Activated B cell treated with CpG ODN at 0.5 μM for 24 hours (primary cell): ENCODE measurements at regions of chr4 and their contacts with region 1.

Region 1: GRCh38 chr4:78667764-78668163 is 108.4 kb upstream of the BMP2K start:
- DNase-seq: no peak
- ATAC-seq: peak; percentile 79
- H3K4me3 Mint-ChIP-seq: peak overlapping the region; percentile 54
- H3K27ac Mint-ChIP-seq: peak overlapping the region; percentile 83
- H3K4me1 Mint-ChIP-seq: peaks cover 85% of the 10 kb centered on the region
- H3K27me3 Mint-ChIP-seq: no peaks in the 10 kb centered on the region
- CTCF ChIP-seq: no peak

Region 2: GRCh38 chr4:78542373-78542772 is 125.4 kb before region 1 on chr4:
- CTCF ChIA-PET with region 1: no interaction called
- POLR2A ChIA-PET with region 1: no interaction called
- intact Hi-C with region 1: no loop called
- DNase-seq: no peak
- ATAC-seq: no peak
- H3K4me3 Mint-ChIP-seq: no peak overlapping the region
- H3K27ac Mint-ChIP-seq: no peak overlapping the region
- H3K4me1 Mint-ChIP-seq: peaks cover 4% of the 10 kb centered on the region
- H3K27me3 Mint-ChIP-seq: peaks cover 4% of the 10 kb centered on the region
- CTCF ChIP-seq: no peak

Region 3: DNA sequence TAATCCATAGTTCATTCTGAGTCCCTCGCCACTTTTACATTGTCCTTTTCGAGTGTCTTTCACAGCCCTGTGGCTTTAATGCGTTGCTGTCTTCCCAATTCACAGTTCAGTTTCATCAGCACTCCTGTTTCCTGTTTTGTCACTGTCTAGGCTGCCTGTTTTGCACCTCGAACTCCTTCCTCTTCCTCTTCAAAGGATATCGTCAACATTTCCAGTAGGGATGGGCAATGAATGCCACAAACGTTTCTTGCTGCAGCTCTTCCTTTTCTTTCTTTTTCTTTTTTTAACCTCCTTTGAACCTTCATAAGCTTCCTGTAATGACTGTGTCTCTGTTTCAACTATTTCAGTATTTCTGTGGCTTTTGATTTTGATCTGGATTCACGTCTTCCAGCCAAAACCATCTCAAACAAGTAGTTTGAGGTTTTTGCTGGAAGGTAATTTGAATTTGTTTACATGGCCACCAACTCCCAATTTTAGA is 10.8 kb before region 1 on chr4:
- CTCF ChIA-PET with region 1: interaction called, 3 read pairs
- POLR2A ChIA-PET with region 1: interaction called, 14 read pairs
- intact Hi-C with region 1: loop called (anchors 1 kb)
- DNase-seq: no peak
- ATAC-seq: no peak
- H3K4me3 Mint-ChIP-seq: peak overlapping the region; percentile 72
- H3K27ac Mint-ChIP-seq: peak overlapping the region; percentile 85
- H3K4me1 Mint-ChIP-seq: peaks cover 51% of the 10 kb centered on the region
- H3K27me3 Mint-ChIP-seq: no peaks in the 10 kb centered on the region
- CTCF ChIP-seq: no peak

Region 4: DNA sequence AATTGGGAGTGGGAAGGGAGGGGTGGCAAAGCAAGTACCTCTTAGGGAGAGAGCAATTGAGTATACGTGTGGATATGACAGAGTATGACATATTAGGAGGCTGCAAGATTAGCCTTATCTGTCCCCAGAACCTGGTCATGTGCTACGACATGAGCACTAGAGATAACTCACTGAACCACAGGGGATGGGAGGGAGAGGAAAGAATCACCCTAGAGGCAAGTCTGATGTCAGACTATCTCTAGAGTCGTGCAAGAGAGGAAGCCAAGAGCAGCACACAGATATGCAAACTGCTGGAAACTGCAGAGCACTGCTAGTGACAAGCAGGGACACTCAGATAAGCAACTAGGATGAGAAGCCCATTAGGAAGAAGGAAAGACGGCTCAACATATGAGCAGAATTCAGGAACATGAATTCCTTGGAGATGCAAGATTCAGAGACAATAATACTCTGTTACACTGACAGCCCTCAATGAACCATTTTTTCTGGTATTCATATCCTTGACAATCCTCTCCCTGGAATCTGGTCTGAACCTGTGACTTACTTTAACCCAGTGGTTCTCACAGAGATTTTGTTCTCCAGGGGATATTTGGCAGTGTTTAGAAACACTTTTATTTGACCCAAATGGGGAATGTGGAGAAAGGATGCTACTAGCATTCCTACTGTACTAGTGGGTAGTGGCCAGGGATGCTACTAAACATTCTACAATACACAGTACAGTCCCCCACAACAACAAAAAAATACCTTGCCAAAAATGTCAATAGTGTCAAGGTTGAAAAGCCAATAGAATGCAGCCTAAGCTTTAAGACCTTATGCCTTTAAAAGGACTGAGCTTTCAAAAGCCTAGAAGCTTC is 24.4 kb after region 1 on chr4:
- CTCF ChIA-PET with region 1: no interaction called
- POLR2A ChIA-PET with region 1: no interaction called
- intact Hi-C with region 1: loop called (anchors 2 kb)
- DNase-seq: no peak
- ATAC-seq: peak; percentile 98
- H3K4me3 Mint-ChIP-seq: no peak overlapping the region
- H3K27ac Mint-ChIP-seq: peak overlapping the region; percentile 2
- H3K4me1 Mint-ChIP-seq: peaks cover 23% of the 10 kb centered on the region
- H3K27me3 Mint-ChIP-seq: no peaks in the 10 kb centered on the region
- CTCF ChIP-seq: no peak

Region 5: DNA sequence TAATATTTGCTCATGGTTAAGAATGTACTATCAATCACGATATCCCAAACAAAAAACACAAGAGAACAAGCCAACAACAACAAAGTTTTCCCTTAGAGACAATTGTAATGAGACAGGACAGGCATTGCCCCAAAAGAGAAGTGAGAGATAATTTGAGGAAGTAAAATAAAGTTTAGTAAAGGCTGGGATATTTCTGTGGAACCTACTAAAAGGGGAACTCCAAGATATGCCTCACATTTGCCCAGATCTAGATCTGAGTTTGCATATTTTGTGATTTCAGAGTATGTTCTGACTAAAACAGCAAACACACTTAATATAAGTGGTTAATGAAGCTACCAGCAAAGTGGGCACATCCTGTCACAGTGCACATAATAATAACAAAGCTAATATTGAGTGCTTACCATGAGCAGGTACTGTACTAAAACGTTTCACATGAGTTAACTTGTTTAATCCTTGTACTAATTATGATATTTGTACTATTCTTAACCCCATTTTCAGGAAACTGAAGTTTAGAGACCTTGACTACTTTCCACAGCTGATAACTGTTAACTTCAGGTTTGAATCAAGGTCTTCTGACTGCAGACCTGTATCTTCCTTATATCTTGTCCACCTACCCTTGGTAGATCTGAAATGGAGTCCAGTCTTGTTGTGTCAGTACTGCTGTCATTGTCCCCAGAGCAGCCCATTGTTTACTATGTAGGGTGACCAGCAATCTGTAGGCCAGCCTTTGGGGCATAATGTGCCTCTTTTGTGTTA is 82.4 kb after region 1 on chr4:
- CTCF ChIA-PET with region 1: no interaction called
- POLR2A ChIA-PET with region 1: no interaction called
- intact Hi-C with region 1: loop called (anchors 1 kb)
- DNase-seq: no peak
- ATAC-seq: peak; percentile 83
- H3K4me3 Mint-ChIP-seq: peak overlapping the region; percentile 74
- H3K27ac Mint-ChIP-seq: peak overlapping the region; percentile 93
- H3K4me1 Mint-ChIP-seq: peaks cover 72% of the 10 kb centered on the region
- H3K27me3 Mint-ChIP-seq: no peaks in the 10 kb centered on the region
- CTCF ChIP-seq: no peak

Region 6: DNA sequence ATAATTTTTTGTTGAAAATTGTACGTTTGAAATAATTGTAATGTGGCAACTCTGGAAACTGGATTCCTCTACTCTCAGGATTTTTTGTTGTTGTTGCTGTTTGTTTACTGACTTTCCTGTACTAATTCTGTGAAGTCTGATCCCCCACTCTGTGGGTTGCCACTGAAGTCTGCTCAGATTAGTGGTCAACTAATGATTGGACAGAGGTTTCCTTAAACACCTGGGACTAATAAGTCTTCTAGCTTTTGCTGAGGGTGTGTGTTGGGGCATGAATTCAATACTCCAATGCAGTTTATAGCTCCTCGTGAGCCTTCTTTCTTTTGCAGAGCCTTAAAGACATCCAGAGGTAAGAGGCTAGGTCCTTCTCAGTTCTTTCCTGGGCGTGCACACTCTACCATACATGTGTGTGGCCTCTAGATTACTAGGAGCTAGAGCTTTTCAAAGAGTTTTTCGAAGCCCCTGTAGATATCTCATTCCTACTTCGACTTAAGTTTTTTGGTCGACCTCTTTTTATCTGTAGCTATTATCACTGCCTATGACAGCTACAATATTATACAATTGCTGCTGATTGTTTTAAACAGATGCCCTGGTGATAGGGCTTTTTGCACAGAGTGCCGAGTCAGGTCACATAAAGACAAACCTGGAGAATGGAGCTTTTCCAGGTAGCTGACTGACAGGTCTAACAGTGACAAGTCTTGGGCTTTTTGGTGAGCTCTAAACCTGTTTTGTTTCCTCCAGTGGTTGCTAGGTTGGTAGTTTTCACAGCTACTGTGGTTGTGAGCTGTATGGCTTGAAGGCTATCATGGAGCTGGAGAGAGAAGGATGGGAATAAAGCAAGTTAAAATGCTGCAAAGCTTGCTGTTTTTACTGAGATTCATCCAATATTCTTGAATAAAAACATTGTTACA is 142.4 kb after region 1 on chr4:
- CTCF ChIA-PET with region 1: no interaction called
- POLR2A ChIA-PET with region 1: no interaction called
- intact Hi-C with region 1: no loop called
- DNase-seq: no peak
- ATAC-seq: no peak
- H3K4me3 Mint-ChIP-seq: no peak overlapping the region
- H3K27ac Mint-ChIP-seq: peak overlapping the region; percentile 5
- H3K4me1 Mint-ChIP-seq: peaks cover 67% of the 10 kb centered on the region
- H3K27me3 Mint-ChIP-seq: no peaks in the 10 kb centered on the region
- CTCF ChIP-seq: no peak

Region 7: DNA sequence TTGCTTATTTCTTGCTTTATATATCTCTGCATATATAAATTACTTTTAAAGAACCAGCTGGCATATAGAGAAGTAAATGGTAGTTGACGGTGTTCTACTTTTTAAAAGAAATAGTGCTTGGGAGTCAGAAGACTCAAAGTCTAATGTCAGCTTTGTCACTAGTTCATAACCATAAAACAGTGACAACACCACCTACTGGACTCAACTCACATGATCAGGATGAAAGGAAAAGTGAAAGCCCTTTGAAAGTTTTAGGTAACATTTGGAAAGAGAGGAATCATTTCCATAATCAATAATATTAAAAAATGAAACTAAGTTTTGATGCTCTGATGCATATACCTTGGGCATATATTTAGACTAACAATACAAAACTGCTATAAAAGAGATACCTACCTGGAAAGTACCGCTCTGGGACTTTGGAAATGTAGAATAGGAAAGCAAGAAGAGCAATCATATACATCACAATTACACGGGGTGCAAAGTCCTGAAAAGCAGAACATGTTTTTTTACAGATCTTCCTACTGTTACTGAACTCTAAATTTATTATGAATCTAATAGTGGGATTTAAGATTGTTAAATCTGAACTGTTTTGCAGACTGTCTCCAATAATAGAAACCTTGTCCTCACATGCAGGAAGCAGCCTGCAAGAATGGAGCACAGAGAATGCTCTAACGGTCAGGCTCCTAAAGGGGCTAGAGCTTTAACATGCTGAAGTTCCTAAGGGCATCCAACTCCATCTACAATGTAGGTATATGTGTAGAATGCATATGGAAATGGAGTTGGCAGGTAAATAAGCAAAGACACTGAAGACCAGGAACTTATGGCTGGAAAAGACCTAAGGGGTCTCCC is 255.9 kb after region 1 on chr4:
- CTCF ChIA-PET with region 1: no interaction called
- POLR2A ChIA-PET with region 1: no interaction called
- intact Hi-C with region 1: no loop called
- DNase-seq: no peak
- ATAC-seq: no peak
- H3K4me3 Mint-ChIP-seq: no peak overlapping the region
- H3K27ac Mint-ChIP-seq: no peak overlapping the region
- H3K4me1 Mint-ChIP-seq: peaks cover 6% of the 10 kb centered on the region
- H3K27me3 Mint-ChIP-seq: no peaks in the 10 kb centered on the region
- CTCF ChIP-seq: no peak